Dendritic cell treated with granulocyte-macrophage colony-stimulating factor and Interleukin-4, amounts not matched to agents 40 ng/mL and 50 ng/mL, for 4 days (primary cell): ENCODE measurements at regions of chr7 and their contacts with region 1.

Region 1: DNA sequence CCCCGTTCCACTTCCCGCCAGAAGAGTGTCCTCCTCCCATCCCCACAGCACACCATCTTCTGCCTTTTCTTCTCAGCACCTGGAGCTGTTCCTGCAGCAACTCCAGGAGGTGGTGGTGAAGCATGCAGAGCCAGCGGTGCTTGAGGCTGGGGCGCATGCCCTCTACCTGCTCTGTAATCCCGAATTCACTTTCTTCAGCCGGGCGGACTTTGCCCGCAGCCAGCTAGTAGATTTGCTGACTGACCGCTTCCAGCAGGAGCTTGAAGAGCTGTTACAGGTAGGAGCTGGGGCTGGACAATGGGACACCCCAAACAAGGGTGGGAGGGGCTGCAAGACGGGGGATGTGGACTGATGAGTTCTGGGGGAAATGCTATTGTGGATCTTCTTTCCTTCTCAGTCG is 19.1 kb upstream of the PVRIG start:
- H3K4me3 Mint-ChIP-seq: peak overlapping the region; percentile 81
- H3K27ac Mint-ChIP-seq: peak overlapping the region; percentile 91
- H3K4me1 Mint-ChIP-seq: peaks cover 68% of the 10 kb centered on the region
- H3K27me3 Mint-ChIP-seq: peaks cover 18% of the 10 kb centered on the region

Region 2: GRCh38 chr7:100190048-100190711 is 10.5 kb before region 1 on chr7:
- intact Hi-C with region 1: loop called (anchors 1 kb)
- H3K4me3 Mint-ChIP-seq: no peak overlapping the region
- H3K27ac Mint-ChIP-seq: peak overlapping the region; percentile 27
- H3K4me1 Mint-ChIP-seq: peaks cover 23% of the 10 kb centered on the region
- H3K27me3 Mint-ChIP-seq: peaks cover 3% of the 10 kb centered on the region